ENCODE measurements at regions of chr4 and their contacts with region 1.

Region 1: DNA sequence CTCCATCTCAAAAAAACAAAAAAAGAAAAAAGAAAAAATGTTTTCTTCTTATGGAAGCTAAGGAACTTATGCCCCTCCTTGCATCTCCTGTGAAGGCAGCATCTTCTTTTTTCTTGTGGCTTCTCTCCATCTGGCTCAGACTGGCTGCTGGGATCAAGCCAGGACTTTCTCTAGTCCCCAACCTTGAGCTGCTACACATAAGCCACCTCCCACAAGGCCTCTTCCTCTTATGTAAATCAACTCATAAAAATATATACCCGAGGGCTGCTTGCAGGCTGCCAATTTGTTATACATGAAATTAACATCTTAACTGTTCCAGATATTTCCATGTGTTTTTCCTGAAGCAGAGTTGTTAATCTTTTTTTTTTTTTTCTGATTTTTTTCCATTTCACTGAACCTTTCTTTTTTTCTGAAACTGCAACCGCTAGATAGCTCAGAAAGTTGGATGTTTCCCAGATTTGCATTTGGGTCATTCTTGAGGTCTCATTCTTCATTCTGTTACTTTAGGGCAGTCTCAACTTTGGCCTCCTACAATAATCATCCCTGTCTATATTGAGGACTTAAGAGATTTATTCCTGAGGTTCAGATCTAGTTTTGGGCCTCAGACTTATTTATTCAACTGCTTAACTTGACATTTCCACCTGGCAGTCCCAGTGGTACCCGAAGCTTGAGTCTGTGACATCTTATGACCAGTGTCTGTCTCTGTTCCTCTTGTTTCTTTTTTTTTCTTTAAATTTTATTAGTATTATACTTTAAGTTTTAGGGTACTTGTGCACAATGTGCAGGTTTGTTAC is 10.3 kb downstream of the SNX25 start:
- DNase-seq: peak; percentile 48 to 55
- ATAC-seq: peak; percentile 92

Region 2: DNA sequence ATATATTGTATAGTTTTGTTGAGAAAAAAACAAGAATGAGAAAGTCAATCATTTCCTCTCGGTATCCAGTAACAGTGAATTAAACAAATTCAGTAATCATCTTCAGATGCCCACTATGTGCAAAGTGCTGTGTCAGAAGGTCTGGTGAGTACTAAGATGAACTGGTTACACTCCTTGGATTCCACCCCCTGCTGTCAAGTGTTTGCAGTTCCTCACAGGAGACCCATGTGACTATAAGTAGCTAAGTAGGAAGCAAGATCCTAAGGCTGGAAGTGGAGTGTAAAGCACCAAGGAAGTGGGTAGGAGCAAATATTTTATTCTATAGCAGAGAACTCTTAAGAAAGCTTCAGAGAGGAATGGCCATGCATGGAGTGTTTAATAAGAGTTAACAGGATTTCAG is 63.2 kb after region 1 on chr4:
- intact Hi-C with region 1: loop called in 1 of 2 experiments (anchors 10 kb)
- DNase-seq: no peak
- ATAC-seq: no peak